ENCODE measurements at regions of chr15 and their contacts with region 1.

Region 1: GRCh38 chr15:85168642-85169173 is 187.1 kb downstream of the PDE8A start:
- DNase-seq: peak; percentile 73 to 75
- ATAC-seq: peak; percentile 85 to 90
- H3K4me3 ChIP-seq: peak overlapping the region; percentile 51
- H3K27ac ChIP-seq: peak overlapping the region; percentile 63 to 73
- H3K4me1 ChIP-seq: peaks cover 5% of the 10 kb centered on the region; the same call in 2 of the 3 replicates
- CTCF ChIP-seq: peak; percentile 84
- EP300 ChIP-seq: no peak
- POLR2A ChIP-seq: no peak
- RAD21 ChIP-seq: peak; percentile 72 to 82

Region 2: GRCh38 chr15:84844964-84845363 is 323.7 kb before region 1 on chr15:
- CTCF ChIA-PET with region 1: no interaction called
- POLR2A ChIA-PET with region 1: no interaction called
- DNase-seq: no peak
- ATAC-seq: no peak
- H3K4me3 ChIP-seq: no peak overlapping the region
- H3K27ac ChIP-seq: peak overlapping the region; percentile 15 to 42; a peak in 4 of 6 replicates
- H3K4me1 ChIP-seq: peaks cover 20% of the 10 kb centered on the region
- CTCF ChIP-seq: no peak
- EP300 ChIP-seq: no peak
- POLR2A ChIP-seq: no peak
- RAD21 ChIP-seq: no peak

Region 3: DNA sequence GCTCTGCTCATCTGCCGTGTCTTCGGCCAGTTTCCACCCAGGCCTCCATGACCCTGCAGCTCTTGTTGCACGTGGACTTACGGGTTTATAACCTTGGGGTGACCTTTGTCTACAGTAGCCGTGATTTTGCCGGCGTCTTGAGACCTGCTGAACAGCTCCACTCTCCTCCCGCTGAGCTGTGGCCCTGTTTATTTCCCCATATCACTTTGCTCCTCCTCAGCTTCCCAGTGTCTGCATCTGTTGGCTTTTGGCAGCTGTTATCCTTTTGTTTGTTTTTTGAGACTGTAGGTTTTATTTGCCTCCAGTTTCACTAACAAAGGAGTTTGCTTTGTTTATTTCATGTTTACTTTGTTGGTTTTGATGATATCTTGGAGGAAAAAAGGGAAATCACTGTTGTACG is 313.6 kb before region 1 on chr15:
- CTCF ChIA-PET with region 1: no interaction called
- POLR2A ChIA-PET with region 1: no interaction called
- DNase-seq: peak in 1 of 2 experiments; percentile 11
- ATAC-seq: no peak; a peak in 1 of 6 replicates
- H3K4me3 ChIP-seq: no peak overlapping the region
- H3K27ac ChIP-seq: no peak overlapping the region
- H3K4me1 ChIP-seq: peaks cover 12% of the 10 kb centered on the region; the same call in 1 of the 3 replicates
- CTCF ChIP-seq: no peak
- EP300 ChIP-seq: no peak
- POLR2A ChIP-seq: no peak
- RAD21 ChIP-seq: no peak

Region 4: GRCh38 chr15:84955089-84955848 is 213.4 kb before region 1 on chr15:
- CTCF ChIA-PET with region 1: interaction called, 17 read pairs
- POLR2A ChIA-PET with region 1: interaction called, 7 read pairs
- DNase-seq: peak; percentile 89 to 92
- ATAC-seq: peak; percentile 99
- H3K4me3 ChIP-seq: peak overlapping the region; percentile 34
- H3K27ac ChIP-seq: peak overlapping the region; percentile 87 to 90
- H3K4me1 ChIP-seq: peaks cover 13% of the 10 kb centered on the region
- CTCF ChIP-seq: peak; percentile 90
- EP300 ChIP-seq: no peak
- POLR2A ChIP-seq: no peak
- RAD21 ChIP-seq: peak; percentile 95

Region 5: DNA sequence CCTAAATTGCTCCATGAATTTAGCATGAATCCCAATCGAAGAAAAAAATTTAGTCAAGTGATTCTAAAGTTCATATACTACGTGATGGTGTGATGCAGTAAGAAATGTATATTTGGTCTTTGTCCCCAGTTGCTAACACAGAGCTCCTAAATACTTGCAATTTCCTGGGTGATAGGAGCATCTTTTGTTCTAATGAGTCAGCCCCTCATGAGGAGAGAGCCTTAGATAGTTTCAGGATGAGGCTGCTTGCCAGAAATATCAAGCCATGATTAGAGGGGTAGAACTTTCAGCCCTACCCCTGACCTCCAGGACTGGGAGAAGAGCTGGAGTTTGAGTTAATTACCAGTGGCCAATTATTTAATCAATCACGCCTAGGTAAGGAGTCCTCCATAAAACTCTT is 16.8 kb before region 1 on chr15:
- CTCF ChIA-PET with region 1: interaction called, 10 read pairs
- POLR2A ChIA-PET with region 1: no interaction called
- DNase-seq: no peak
- ATAC-seq: 0 out of 6 replicates have a peak, but pooled peaks of 1 of the 2 experiments have one; percentile 10
- H3K4me3 ChIP-seq: no peak overlapping the region
- H3K27ac ChIP-seq: no peak overlapping the region
- H3K4me1 ChIP-seq: no peaks in the 10 kb centered on the region
- CTCF ChIP-seq: no peak
- EP300 ChIP-seq: no peak
- POLR2A ChIP-seq: no peak
- RAD21 ChIP-seq: no peak

Region 6: GRCh38 chr15:86444527-86444926 is 1275.8 kb after region 1 on chr15:
- CTCF ChIA-PET with region 1: no interaction called
- POLR2A ChIA-PET with region 1: no interaction called
- DNase-seq: no peak
- ATAC-seq: no peak
- H3K4me3 ChIP-seq: no peak overlapping the region
- H3K27ac ChIP-seq: no peak overlapping the region
- H3K4me1 ChIP-seq: no peaks in the 10 kb centered on the region
- CTCF ChIP-seq: no peak
- EP300 ChIP-seq: no peak
- POLR2A ChIP-seq: no peak
- RAD21 ChIP-seq: no peak

Measured in A549 (cell line).